ENCODE measurements at regions of chrX and their contacts with region 1.

Region 1: GRCh38 chrX:129726307-129727111 is 12.3 kb upstream of the XPNPEP2 start:
- DNase-seq: peak; percentile 51
- H3K4me3 ChIP-seq: no peak overlapping the region
- H3K27ac ChIP-seq: no peak overlapping the region
- H3K4me1 ChIP-seq: no peaks in the 10 kb centered on the region; a peak in 1 of 4 replicates
- H3K27me3 ChIP-seq: peaks cover 6% of the 10 kb centered on the region
- CTCF ChIP-seq: peak; percentile 89
- EP300 ChIP-seq: no peak
- RAD21 ChIP-seq: peak; percentile 88

Region 2: GRCh38 chrX:129606918-129607317 is 119.6 kb before region 1 on chrX:
- CTCF ChIA-PET with region 1: interaction called, 24 read pairs
- POLR2A ChIA-PET with region 1: no interaction called
- DNase-seq: peak; percentile 72
- H3K4me3 ChIP-seq: no peak overlapping the region
- H3K27ac ChIP-seq: no peak overlapping the region
- H3K4me1 ChIP-seq: peaks cover 0 to 3% of the 10 kb centered on the region in 2 experiments; a peak in 1 of 4 replicates
- H3K27me3 ChIP-seq: no peaks in the 10 kb centered on the region; the same call in 1 of the 2 replicates
- CTCF ChIP-seq: peak; percentile 83
- EP300 ChIP-seq: no peak
- RAD21 ChIP-seq: peak; percentile 91

Region 3: GRCh38 chrX:129632443-129632842 is 94.1 kb before region 1 on chrX:
- CTCF ChIA-PET with region 1: interaction called, 119 read pairs
- POLR2A ChIA-PET with region 1: no interaction called
- DNase-seq: no peak
- H3K4me3 ChIP-seq: no peak overlapping the region
- H3K27ac ChIP-seq: no peak overlapping the region
- H3K4me1 ChIP-seq: peaks cover 0 to 8% of the 10 kb centered on the region in 2 experiments; a peak in 1 of 4 replicates
- H3K27me3 ChIP-seq: peaks cover 6% of the 10 kb centered on the region; the same call in 1 of the 2 replicates
- CTCF ChIP-seq: no peak
- EP300 ChIP-seq: no peak
- RAD21 ChIP-seq: no peak

Region 4: DNA sequence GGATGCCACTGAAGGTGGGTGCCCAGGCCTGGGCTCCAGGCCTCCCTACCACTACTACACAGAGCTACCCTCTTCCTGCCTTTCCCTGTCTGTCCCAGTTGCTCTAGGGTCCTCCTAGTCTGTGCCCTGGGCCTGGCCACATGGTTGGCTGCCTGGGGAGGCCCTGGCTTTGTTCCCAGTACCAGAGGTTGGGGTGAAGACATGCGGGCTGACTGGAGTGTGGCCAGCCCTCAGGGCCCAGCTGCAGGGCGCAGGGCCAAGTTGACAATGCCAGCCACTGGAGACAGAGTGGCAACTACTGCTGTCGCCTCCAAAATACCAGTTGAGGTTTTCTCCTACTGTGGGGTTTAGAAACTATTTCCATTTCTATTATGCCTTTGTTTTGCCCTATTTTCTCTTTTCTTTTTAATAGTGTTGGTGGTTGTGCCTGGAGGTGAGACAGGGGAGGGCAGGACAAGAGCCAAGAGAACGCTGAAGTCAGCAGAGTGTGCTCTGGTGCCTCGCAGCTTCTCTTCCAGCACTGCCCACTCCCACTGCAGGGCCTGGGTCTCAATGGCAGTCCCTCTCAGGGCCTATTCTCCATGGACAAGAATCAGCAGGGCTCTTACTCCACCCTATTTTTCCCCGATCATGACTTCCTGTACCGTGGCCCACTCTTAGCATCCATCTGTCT is 20.0 kb before region 1 on chrX:
- CTCF ChIA-PET with region 1: interaction called, 17 read pairs
- POLR2A ChIA-PET with region 1: no interaction called
- DNase-seq: peak; percentile 42
- H3K4me3 ChIP-seq: no peak overlapping the region
- H3K27ac ChIP-seq: no peak overlapping the region
- H3K4me1 ChIP-seq: peaks cover 0 to 6% of the 10 kb centered on the region in 2 experiments; a peak in 1 of 4 replicates
- H3K27me3 ChIP-seq: no peaks in the 10 kb centered on the region; the same call in 1 of the 2 replicates
- CTCF ChIP-seq: no peak
- EP300 ChIP-seq: no peak
- RAD21 ChIP-seq: no peak

Region 5: GRCh38 chrX:129737916-129738315 is 11.4 kb after region 1 on chrX:
- CTCF ChIA-PET with region 1: interaction called, 43 read pairs
- POLR2A ChIA-PET with region 1: interaction called, 6 read pairs
- DNase-seq: no peak
- H3K4me3 ChIP-seq: no peak overlapping the region
- H3K27ac ChIP-seq: peak overlapping the region in 1 of 2 experiments; percentile 86; a peak in 2 of 4 replicates
- H3K4me1 ChIP-seq: peaks cover 0 to 28% of the 10 kb centered on the region in 2 experiments; a peak in 1 of 4 replicates
- H3K27me3 ChIP-seq: peaks cover 8% of the 10 kb centered on the region
- CTCF ChIP-seq: no peak
- EP300 ChIP-seq: no peak
- RAD21 ChIP-seq: no peak

Region 6: GRCh38 chrX:130224518-130225209 is 498.2 kb after region 1 on chrX:
- CTCF ChIA-PET with region 1: no interaction called
- POLR2A ChIA-PET with region 1: no interaction called
- DNase-seq: no peak
- H3K4me3 ChIP-seq: no peak overlapping the region
- H3K27ac ChIP-seq: no peak overlapping the region
- H3K4me1 ChIP-seq: no peaks in the 10 kb centered on the region
- H3K27me3 ChIP-seq: no peaks in the 10 kb centered on the region
- CTCF ChIP-seq: no peak
- EP300 ChIP-seq: no peak
- RAD21 ChIP-seq: no peak